ENCODE measurements at regions of chr14 and their contacts with region 1.

Region 1: GRCh38 chr14:49879683-49880204 is 13.1 kb upstream of the ARF6 start:
- DNase-seq: peak in 6 of 9 experiments; percentile 38 to 83 (median 62)
- ATAC-seq: peak; percentile 97
- H3K4me3 ChIP-seq: no peak overlapping the region
- H3K4me3 Mint-ChIP-seq: no peak overlapping the region
- H3K27ac ChIP-seq: no peak overlapping the region
- H3K27ac Mint-ChIP-seq: no peak overlapping the region
- H3K4me1 ChIP-seq: peaks cover 11% of the 10 kb centered on the region
- H3K4me1 Mint-ChIP-seq: peaks cover 12% of the 10 kb centered on the region
- H3K27me3 ChIP-seq: no peaks in the 10 kb centered on the region
- H3K27me3 Mint-ChIP-seq: no peaks in the 10 kb centered on the region
- CTCF ChIP-seq: peak; percentile 47

Region 2: DNA sequence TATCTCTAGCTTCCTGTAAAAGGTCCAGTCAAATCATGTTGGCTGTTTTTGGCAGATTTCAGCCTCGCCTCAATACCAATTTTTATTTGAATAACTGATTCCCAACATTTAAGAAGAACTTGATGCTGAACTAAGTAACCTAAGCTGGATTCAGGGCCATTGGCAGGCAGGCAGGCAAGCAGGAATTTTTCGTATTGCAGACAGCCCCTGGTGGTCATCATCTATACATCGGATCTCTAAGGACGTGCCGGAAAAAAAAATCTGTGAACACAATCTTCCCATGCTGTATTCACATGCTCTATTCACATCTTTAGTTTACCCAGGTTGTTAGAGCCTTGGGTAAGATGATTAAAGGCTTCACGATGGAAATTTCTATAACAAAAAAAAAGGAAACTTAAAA is 229.6 kb after region 1 on chr14:
- CTCF ChIA-PET with region 1: interaction called, 23 read pairs
- POLR2A ChIA-PET with region 1: interaction called, 9 read pairs
- intact Hi-C with region 1: no loop called
- DNase-seq: no peak
- ATAC-seq: no peak
- H3K4me3 ChIP-seq: no peak overlapping the region
- H3K4me3 Mint-ChIP-seq: no peak overlapping the region
- H3K27ac ChIP-seq: no peak overlapping the region
- H3K27ac Mint-ChIP-seq: no peak overlapping the region
- H3K4me1 ChIP-seq: peaks cover 1% of the 10 kb centered on the region
- H3K4me1 Mint-ChIP-seq: peaks cover 20% of the 10 kb centered on the region
- H3K27me3 ChIP-seq: no peaks in the 10 kb centered on the region
- H3K27me3 Mint-ChIP-seq: no peaks in the 10 kb centered on the region
- CTCF ChIP-seq: no peak

Region 3: DNA sequence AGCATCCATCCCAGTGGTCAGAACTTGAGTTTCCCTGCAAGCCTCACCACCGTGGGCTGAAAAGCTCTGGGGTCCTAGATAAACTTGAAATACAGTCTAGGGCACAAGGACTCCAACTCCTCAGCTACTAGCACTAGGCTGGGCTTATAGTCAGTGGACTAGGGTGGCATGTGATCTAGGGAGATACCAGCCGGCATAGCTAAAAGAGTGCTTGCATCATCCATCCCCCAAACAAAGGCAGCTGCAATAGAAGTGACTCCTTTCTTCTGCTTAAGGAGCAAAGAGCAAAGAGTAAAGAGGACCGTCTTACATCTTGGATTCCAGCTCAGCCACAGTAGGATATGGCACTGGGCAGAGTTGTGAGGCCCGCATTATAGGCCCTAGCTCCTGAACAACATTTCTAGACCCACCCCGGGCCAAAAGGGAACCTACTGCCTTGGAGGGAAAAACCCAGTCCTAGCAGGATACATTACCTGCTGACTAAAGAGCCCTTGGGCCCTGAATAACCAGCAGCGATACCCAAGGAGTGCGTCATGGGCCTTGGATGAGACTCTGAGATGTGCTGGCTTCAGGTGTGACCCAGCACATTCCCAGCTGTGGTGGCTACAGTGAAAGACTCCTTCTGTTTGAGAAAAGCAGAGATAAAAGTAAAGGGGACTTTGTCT is 369.5 kb after region 1 on chr14:
- CTCF ChIA-PET with region 1: no interaction called
- POLR2A ChIA-PET with region 1: no interaction called
- intact Hi-C with region 1: no loop called
- DNase-seq: no peak
- ATAC-seq: no peak
- H3K4me3 ChIP-seq: no peak overlapping the region
- H3K4me3 Mint-ChIP-seq: no peak overlapping the region
- H3K27ac ChIP-seq: no peak overlapping the region
- H3K27ac Mint-ChIP-seq: no peak overlapping the region
- H3K4me1 ChIP-seq: no peaks in the 10 kb centered on the region
- H3K4me1 Mint-ChIP-seq: no peaks in the 10 kb centered on the region
- H3K27me3 ChIP-seq: no peaks in the 10 kb centered on the region
- H3K27me3 Mint-ChIP-seq: no peaks in the 10 kb centered on the region
- CTCF ChIP-seq: no peak